ENCODE measurements at regions of chr3 and their contacts with region 1.

Region 1: GRCh38 chr3:10883478-10884234 is 67.6 kb downstream of the SLC6A11 start:
- DNase-seq: no peak
- ATAC-seq: no peak
- H3K4me3 ChIP-seq: no peak overlapping the region
- H3K27ac ChIP-seq: no peak overlapping the region
- H3K4me1 ChIP-seq: no peaks in the 10 kb centered on the region
- H3K27me3 ChIP-seq: peaks cover 0 to 52% (median 21%) of the 10 kb centered on the region in 7 donors
- CTCF ChIP-seq: peak in 8 of 9 donors; percentile 22 to 48 (median 38)

Region 2: DNA sequence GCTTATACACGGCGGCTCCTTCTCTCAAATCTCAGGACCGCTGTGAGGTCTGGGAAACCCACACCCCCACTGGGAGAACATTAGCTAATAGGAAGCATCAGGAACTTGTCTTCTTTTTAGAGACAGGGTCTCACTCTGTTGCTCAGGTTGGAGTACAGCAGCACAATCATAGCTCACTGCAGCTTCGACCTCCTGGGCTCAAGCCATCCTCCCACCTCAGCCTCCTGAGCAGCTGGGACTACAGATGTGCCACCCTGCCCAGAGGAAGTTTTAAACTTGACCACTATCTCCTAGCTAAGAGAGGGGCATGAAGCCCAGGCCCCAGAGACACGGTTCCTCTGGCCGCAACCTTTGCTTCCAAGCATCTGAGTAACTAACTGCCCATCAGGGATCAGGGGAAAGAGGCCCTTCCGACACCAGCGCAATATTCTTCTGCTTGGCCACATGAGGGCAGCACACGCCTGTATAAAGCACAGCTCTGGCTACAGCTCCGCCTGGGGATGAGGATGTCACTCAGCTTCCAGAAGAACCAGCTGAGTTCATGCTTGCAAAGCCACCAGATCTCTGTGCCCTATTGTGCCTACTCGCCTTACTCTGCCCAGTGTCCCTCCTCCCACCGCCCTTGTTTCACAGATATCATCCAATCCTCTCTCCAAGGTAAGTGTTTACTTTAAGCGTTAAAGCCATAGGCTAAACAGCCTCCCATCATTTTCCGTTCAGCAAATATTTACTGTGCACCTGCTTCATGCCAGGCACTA is 125.2 kb before region 1 on chr3:
- intact Hi-C with region 1: loop called in 6 of 10 experiments (anchors 5 to 10 kb)
- DNase-seq: peak; percentile 22 to 42
- ATAC-seq: peak; percentile 75 to 89 (median 84)
- H3K4me3 ChIP-seq: no peak overlapping the region
- H3K27ac ChIP-seq: no peak overlapping the region
- H3K4me1 ChIP-seq: no peaks in the 10 kb centered on the region
- H3K27me3 ChIP-seq: peaks cover 0 to 76% (median 52%) of the 10 kb centered on the region in 7 donors
- CTCF ChIP-seq: peak; percentile 41 to 76 (median 72)

Region 3: GRCh38 chr3:10764259-10765051 is 119.2 kb before region 1 on chr3:
- intact Hi-C with region 1: loop called in 6 of 10 experiments (anchors 5 to 10 kb)
- DNase-seq: no peak
- ATAC-seq: peak in 2 of 8 donors; percentile 24 to 46
- H3K4me3 ChIP-seq: no peak overlapping the region
- H3K27ac ChIP-seq: no peak overlapping the region
- H3K4me1 ChIP-seq: no peaks in the 10 kb centered on the region
- H3K27me3 ChIP-seq: peaks cover 3 to 78% (median 53%) of the 10 kb centered on the region in 7 donors
- CTCF ChIP-seq: no peak

Region 4: GRCh38 chr3:11185564-11186317 is 302.1 kb after region 1 on chr3:
- intact Hi-C with region 1: no loop called
- DNase-seq: peak; percentile 56 to 84
- ATAC-seq: peak; percentile 95 to 99 (median 97)
- H3K4me3 ChIP-seq: peak overlapping the region in 1 of 10 donors; percentile 11
- H3K27ac ChIP-seq: peak overlapping the region in 9 of 10 donors; percentile 15 to 73 (median 39)
- H3K4me1 ChIP-seq: peaks cover 3 to 29% (median 23%) of the 10 kb centered on the region in 9 donors
- H3K27me3 ChIP-seq: no peaks in the 10 kb centered on the region
- CTCF ChIP-seq: peak in 3 of 9 donors; percentile 11 to 20 (median 18)